Esophagus muscularis mucosa (tissue), 4 donors: ENCODE measurements at regions of chr4 and their contacts with region 1.

Region 1: DNA sequence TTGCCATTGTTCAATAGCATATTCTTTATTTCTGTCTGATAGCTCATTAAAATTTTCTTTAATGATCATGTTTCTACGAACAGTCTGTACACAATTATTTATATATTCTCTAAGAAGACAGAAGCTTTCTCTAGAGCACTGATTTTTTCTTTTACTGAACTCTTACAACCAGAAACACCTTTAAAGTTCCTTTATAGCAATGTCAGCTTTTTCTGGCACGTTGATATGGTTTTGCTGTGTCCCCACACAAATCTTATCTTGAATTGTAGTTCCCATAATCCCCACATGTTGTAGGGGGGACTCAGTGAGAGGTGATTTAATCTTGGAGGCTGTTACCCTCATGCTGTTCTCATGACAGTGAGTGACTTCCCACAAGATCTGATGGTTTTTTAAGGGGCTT is 299.4 kb downstream of the PPARGC1A start:
- DNase-seq: no peak
- H3K4me3 ChIP-seq: no peak overlapping the region
- H3K27ac ChIP-seq: no peak overlapping the region
- H3K4me1 ChIP-seq: no peaks in the 10 kb centered on the region
- H3K27me3 ChIP-seq: no peaks in the 10 kb centered on the region
- CTCF ChIP-seq: no peak
- EP300 ChIP-seq: no peak
- POLR2A ChIP-seq: no peak

Region 2: GRCh38 chr4:23219779-23220408 is 370.5 kb before region 1 on chr4:
- intact Hi-C with region 1: no loop called
- DNase-seq: no peak
- H3K4me3 ChIP-seq: no peak overlapping the region
- H3K27ac ChIP-seq: no peak overlapping the region
- H3K4me1 ChIP-seq: no peaks in the 10 kb centered on the region
- H3K27me3 ChIP-seq: no peaks in the 10 kb centered on the region
- CTCF ChIP-seq: no peak
- EP300 ChIP-seq: no peak
- POLR2A ChIP-seq: no peak

Region 3: DNA sequence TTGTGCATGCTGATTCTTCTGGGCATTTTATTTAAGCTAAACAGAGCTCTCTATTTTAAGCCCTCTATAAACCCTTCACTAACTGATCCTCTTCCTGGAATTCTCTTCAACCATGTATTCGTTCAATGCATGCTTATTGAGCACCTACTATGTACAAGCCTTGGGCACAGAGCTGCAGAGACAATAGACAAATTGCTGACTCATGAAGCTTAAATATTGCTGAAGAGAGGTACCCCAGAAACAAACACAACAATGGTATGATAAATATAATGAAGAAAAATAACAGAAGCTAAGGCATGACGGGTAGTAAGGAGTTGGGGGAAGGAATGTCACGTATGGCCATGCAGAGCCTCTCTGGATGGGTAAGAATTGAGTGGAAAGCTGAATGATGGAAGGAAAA is 77.2 kb after region 1 on chr4:
- intact Hi-C with region 1: no loop called
- DNase-seq: no peak
- H3K4me3 ChIP-seq: no peak overlapping the region
- H3K27ac ChIP-seq: no peak overlapping the region
- H3K4me1 ChIP-seq: no peaks in the 10 kb centered on the region
- H3K27me3 ChIP-seq: no peaks in the 10 kb centered on the region
- CTCF ChIP-seq: no peak
- EP300 ChIP-seq: no peak
- POLR2A ChIP-seq: no peak

Region 4: DNA sequence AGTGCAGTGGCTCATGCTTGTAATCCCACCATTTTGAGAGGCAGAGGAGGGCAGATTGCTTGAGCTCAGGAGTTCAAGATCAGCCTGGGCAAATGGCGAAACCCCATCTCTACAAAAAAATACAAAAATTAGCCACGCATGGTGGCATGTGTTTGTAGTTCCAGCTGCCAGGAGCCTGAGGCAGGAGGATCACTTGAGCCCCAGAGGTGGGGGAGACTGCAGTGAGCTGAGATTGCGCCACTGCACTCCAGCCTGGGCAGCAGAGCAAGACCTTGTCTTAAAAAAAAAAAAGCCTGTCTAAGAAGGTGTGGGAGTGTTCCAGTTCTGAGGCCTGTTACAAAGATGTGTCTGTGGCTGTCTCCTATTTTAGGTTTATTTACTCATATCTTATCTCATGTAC is 1681.4 kb after region 1 on chr4:
- intact Hi-C with region 1: loop called (anchors 10 kb)
- DNase-seq: no peak
- H3K4me3 ChIP-seq: no peak overlapping the region
- H3K27ac ChIP-seq: no peak overlapping the region
- H3K4me1 ChIP-seq: no peaks in the 10 kb centered on the region
- H3K27me3 ChIP-seq: no peaks in the 10 kb centered on the region
- CTCF ChIP-seq: no peak
- EP300 ChIP-seq: no peak
- POLR2A ChIP-seq: no peak